HEK293 (cell line): ENCODE measurements at regions of chr17 and their contacts with region 1.

Region 1: DNA sequence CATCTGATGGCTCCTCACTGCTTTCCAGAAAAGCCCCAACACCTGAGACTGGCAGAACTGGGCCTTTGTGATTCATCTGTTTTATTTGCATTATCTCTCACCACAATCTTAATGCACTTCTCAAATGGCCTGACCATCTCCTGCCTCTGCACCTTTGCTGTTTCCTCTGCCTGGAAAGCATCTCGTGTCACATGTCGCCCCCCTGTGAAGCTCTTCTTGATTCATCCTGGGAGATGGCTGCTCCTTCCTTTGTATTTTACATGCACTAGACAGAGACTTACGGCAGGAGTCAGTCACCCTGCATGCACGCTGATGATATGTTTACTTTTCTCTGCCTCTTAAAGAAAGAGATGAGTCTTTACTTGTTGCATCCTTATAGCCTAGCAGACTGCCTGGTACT is 30.0 kb downstream of the HNF1B start:
- H3K4me3 ChIP-seq: no peak overlapping the region
- H3K27ac ChIP-seq: no peak overlapping the region
- H3K4me1 ChIP-seq: peaks cover 11% of the 10 kb centered on the region
- CTCF ChIP-seq: no peak

Region 2: GRCh38 chr17:37505333-37505732 is 209.6 kb before region 1 on chr17:
- CTCF ChIA-PET with region 1: no interaction called
- POLR2A ChIA-PET with region 1: no interaction called
- H3K4me3 ChIP-seq: no peak overlapping the region
- H3K27ac ChIP-seq: no peak overlapping the region
- H3K4me1 ChIP-seq: no peaks in the 10 kb centered on the region
- CTCF ChIP-seq: no peak

Region 3: DNA sequence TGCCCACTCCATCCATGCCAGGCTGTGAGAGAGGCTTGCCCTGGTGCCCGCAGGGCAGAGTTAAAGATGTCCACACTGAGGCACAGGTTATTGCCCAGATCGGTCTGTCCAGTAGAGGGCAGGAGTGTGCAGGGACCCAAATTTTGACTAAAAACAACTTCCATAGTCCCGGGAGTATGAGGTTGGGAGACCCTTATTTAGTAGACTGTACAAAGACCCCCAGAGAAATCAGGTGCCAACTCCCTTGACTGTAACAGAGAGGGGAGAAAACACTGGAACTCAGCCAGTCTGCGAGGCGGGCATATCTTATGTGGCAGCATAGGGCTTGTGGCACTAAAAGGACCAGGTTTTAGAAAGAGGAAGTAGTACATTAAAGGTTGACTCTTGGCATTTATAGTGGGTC is 13.4 kb before region 1 on chr17:
- CTCF ChIA-PET with region 1: interaction called, 15 read pairs
- POLR2A ChIA-PET with region 1: no interaction called
- H3K4me3 ChIP-seq: no peak overlapping the region
- H3K27ac ChIP-seq: no peak overlapping the region
- H3K4me1 ChIP-seq: no peaks in the 10 kb centered on the region
- CTCF ChIP-seq: 0 out of 2 replicates have a peak, but pooled peaks have one; percentile 30

Region 4: GRCh38 chr17:37752482-37752881 is 37.6 kb after region 1 on chr17:
- CTCF ChIA-PET with region 1: no interaction called
- POLR2A ChIA-PET with region 1: no interaction called
- H3K4me3 ChIP-seq: no peak overlapping the region
- H3K27ac ChIP-seq: no peak overlapping the region
- H3K4me1 ChIP-seq: no peaks in the 10 kb centered on the region
- CTCF ChIP-seq: no peak

Region 5: GRCh38 chr17:37824534-37825485 is 109.9 kb after region 1 on chr17:
- CTCF ChIA-PET with region 1: no interaction called
- POLR2A ChIA-PET with region 1: no interaction called
- H3K4me3 ChIP-seq: no peak overlapping the region
- H3K27ac ChIP-seq: no peak overlapping the region
- H3K4me1 ChIP-seq: no peaks in the 10 kb centered on the region; the same call in 1 of the 2 replicates
- CTCF ChIP-seq: no peak